BJ (cell line): ENCODE measurements at regions of chr15 and their contacts with region 1.

Region 1: DNA sequence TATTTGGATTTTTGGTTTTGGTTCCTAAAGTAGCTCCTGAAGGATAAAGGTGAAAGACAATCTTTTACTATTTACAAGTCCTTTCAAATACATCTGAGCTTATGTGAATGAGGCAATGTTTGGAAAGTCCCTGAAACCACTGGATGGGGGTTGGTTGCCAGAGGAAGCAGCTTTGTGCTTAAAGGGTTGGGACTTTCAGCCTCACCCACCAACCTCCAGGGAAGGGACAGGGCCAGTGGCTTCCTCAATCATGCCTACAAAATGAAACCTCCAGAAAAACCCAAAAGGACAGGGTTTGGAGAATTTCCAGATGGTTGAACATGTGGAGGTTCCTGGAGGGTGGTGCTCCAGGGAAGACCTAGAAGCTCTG is 20.9 kb upstream of the ABHD17C start:
- DNase-seq: no peak
- H3K4me3 ChIP-seq: no peak overlapping the region
- H3K27me3 ChIP-seq: no peaks in the 10 kb centered on the region
- CTCF ChIP-seq: no peak

Region 2: DNA sequence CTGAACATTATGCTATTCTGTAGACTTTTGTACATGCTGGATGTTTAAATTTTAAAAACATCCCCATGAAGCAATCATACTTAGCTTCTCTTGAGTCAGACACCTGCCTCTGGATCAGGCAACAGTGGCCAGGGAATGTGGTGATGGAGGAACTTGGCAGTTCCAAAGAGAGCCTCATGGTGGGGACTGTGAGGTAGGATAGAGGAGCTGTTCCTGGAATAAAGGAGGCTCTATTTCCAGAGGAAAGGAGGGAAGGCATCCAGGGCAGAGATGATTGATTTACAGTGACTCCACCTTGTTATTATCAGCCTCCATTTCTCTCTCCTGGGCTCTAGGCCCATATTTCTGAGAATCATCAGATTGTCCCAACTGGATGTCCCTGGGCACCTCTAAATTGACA is 14.1 kb before region 1 on chr15:
- CTCF ChIA-PET with region 1: interaction called, 10 read pairs
- POLR2A ChIA-PET with region 1: no interaction called
- DNase-seq: no peak
- H3K4me3 ChIP-seq: no peak overlapping the region
- H3K27me3 ChIP-seq: no peaks in the 10 kb centered on the region
- CTCF ChIP-seq: peak; percentile 53

Region 3: DNA sequence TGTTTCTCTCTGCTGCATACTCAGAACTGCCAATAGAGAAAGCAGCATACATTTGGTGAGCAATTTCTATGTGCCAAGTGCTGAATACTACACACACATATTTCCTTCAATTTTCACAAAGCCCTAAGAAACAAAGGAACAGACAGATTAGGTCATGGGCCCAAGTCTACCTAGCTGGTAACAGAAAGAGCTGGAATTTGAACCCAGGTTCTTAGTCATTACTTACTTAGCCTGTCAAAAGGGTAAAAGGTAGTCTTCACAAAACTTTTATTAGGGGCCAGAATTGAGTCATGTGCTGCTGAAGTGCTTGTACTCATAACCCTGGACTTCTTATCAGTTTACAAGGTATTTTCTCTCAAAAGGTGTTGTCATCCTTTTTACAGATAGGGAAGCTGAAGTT is 10.5 kb after region 1 on chr15:
- CTCF ChIA-PET with region 1: interaction called, 15 read pairs
- POLR2A ChIA-PET with region 1: no interaction called
- DNase-seq: no peak
- H3K4me3 ChIP-seq: no peak overlapping the region
- H3K27me3 ChIP-seq: no peaks in the 10 kb centered on the region; the same call in 1 of the 2 replicates
- CTCF ChIP-seq: no peak

Region 4: DNA sequence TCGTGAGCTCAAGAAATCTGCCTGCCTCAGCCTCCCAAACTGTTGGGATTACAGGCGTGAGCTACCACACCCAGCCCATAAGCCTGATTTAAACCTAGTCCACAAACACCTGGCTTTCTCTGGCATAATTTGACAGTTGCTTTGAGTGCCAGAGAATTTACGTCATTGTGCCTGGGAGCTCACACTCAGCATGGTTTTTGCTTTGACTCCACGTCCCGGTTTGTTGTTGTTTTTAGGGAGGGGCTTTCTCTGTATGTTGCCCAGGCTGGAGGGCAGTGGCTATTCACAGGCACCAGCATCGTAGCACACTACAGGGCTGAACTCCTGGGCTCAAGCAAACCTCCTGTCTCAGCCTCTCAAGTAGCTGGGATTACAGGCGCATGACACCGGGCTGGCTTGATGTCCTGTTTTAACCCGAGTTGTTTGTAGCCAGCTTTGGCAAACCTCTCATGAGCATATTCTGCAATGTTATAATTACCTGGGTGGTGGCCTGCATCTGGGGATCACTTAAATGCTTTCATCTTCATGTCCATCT is 137.6 kb after region 1 on chr15:
- CTCF ChIA-PET with region 1: no interaction called
- POLR2A ChIA-PET with region 1: no interaction called
- DNase-seq: no peak
- H3K4me3 ChIP-seq: no peak overlapping the region
- H3K27me3 ChIP-seq: no peaks in the 10 kb centered on the region
- CTCF ChIP-seq: no peak

Region 5: GRCh38 chr15:81015621-81016488 is 341.6 kb after region 1 on chr15:
- CTCF ChIA-PET with region 1: no interaction called
- POLR2A ChIA-PET with region 1: no interaction called
- DNase-seq: no peak
- H3K4me3 ChIP-seq: no peak overlapping the region
- H3K27me3 ChIP-seq: no peaks in the 10 kb centered on the region
- CTCF ChIP-seq: no peak